Right lobe of liver (tissue), 6 donors: ENCODE measurements at regions of chr11 and their contacts with region 1.

Region 1: GRCh38 chr11:10405855-10406592 is 49.0 kb upstream of the AMPD3 start:
- DNase-seq: peak in 2 of 3 donors; percentile 52 to 72
- ATAC-seq: peak; percentile 92 to 95 (median 92)
- H3K4me3 ChIP-seq: no peak overlapping the region
- H3K27ac ChIP-seq: no peak overlapping the region
- H3K4me1 ChIP-seq: peaks cover 0 to 6% (median 0%) of the 10 kb centered on the region in 4 donors
- H3K27me3 ChIP-seq: no peaks in the 10 kb centered on the region
- CTCF ChIP-seq: peak; percentile 70 to 81 (median 76)
- POLR2A ChIP-seq: no peak

Region 2: GRCh38 chr11:10550503-10551289 is 144.7 kb after region 1 on chr11:
- intact Hi-C with region 1: no loop called
- DNase-seq: no peak
- ATAC-seq: peak in 2 of 4 donors; percentile 35 to 84
- H3K4me3 ChIP-seq: no peak overlapping the region
- H3K27ac ChIP-seq: no peak overlapping the region
- H3K4me1 ChIP-seq: no peaks in the 10 kb centered on the region
- H3K27me3 ChIP-seq: no peaks in the 10 kb centered on the region
- CTCF ChIP-seq: no peak
- POLR2A ChIP-seq: no peak

Region 3: GRCh38 chr11:10735481-10736475 is 329.8 kb after region 1 on chr11:
- intact Hi-C with region 1: loop called (anchors 5 to 10 kb)
- DNase-seq: peak; percentile 91 to 96 (median 94)
- ATAC-seq: peak; percentile 99 to 100 (median 100)
- H3K4me3 ChIP-seq: peak overlapping the region in 1 of 3 donors; percentile 9
- H3K27ac ChIP-seq: no peak overlapping the region
- H3K4me1 ChIP-seq: no peaks in the 10 kb centered on the region
- H3K27me3 ChIP-seq: no peaks in the 10 kb centered on the region
- CTCF ChIP-seq: peak; percentile 97 to 99 (median 98)
- POLR2A ChIP-seq: no peak